Transverse colon (tissue), 4 donors: ENCODE measurements at regions of chr14 and their contacts with region 1.

Region 1: DNA sequence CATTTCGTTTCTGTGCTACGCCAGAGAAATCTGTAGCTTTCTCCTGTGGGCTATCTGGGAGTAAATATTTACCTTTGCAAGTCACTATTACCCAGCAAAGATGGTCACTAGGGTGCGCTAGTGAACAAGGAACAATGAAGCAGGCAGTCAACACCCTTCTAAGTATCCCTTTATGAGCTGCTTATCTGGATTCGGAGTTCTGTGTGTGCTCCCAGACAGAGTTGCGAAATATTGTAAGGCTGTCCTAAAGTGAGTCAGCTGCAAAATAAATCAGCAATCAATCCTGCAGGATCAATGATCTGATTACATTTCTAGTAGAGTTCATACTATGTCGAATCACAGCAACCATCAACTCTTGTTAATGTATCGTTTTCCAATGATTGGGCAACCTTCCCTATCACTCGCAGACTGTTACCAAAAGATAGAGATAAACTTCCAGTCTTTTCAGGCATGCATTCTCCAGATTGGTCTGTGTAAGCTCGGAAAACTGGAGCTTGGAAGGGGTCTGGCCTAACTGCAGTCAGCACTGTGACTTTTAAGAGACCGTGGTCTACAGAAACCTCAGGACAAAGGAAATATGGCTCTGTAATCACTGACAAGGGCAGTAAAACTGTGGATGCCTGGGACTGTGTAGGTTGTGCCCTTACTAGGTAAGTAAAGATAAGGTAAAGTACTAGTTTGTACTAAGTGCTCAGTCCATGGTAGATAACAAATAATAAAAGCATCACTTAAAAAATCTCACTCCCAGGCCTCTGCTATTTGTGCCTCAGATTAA is 133.5 kb downstream of the KCNK10 start:
- DNase-seq: peak; percentile 88
- H3K4me3 ChIP-seq: peak overlapping the region in 2 of 4 donors; percentile 9 to 22
- H3K27ac ChIP-seq: no peak overlapping the region
- H3K4me1 ChIP-seq: peaks cover 0 to 14% (median 6%) of the 10 kb centered on the region in 4 donors
- H3K27me3 ChIP-seq: peaks cover 12% of the 10 kb centered on the region
- CTCF ChIP-seq: peak; percentile 51 to 75 (median 59)
- EP300 ChIP-seq: no peak
- POLR2A ChIP-seq: no peak

Region 2: GRCh38 chr14:88385345-88386101 is 195.9 kb after region 1 on chr14 and contains the start of gene SPATA7:
- in situ Hi-C with region 1: loop called in 1 of 4 experiments (anchors 25 kb)
- intact Hi-C with region 1: no loop called
- DNase-seq: peak; percentile 95
- H3K4me3 ChIP-seq: peak within 1 kb of the TSS; percentile 62 to 95 (median 74)
- H3K27ac ChIP-seq: peak within 1 kb of the TSS; percentile 78 to 88 (median 82)
- H3K4me1 ChIP-seq: peaks cover 0 to 19% (median 7%) of the 10 kb centered on the region in 4 donors
- H3K27me3 ChIP-seq: no peaks in the 10 kb centered on the region
- CTCF ChIP-seq: no peak
- EP300 ChIP-seq: no peak
- POLR2A ChIP-seq: peak; percentile 69
- total RNA-seq, gene SPATA7: 2.8 to 15.7 (median 10.8) TPM

Region 3: DNA sequence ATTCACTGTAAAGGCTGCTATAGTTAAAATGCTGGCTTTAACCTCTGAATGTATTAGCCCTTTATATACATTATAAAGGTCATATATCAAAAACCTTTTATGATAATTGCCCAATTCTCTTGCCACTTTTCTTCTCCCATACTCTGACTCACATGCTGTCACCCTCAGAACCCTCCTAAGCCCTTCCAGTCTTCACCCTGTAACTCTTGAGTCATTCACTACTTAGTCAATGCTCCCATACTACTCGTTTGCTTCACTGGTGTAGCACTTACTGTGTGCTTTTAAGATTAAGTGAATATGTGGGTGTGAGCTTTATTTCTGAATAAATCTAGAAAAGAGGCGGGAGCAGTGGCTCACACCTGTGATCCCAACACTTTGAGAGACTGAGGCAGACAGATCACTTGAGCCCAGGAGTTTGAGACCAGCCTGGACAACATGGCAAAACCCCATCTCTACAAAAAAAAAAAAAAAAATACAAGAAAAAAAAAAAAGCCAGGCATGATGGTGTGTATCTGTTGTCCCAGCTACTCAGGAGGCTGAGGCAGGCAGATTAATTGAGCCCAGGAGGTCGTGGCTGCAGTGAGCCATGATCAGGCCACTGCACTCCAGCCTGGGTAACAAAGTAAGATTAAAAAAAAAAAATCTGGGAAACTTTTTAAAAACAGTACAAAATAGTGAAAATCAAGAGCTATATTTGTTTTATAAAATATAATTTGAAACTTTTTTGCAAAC is 233.5 kb after region 1 on chr14:
- in situ Hi-C with region 1: no loop called
- intact Hi-C with region 1: no loop called
- DNase-seq: no peak
- H3K4me3 ChIP-seq: no peak overlapping the region
- H3K27ac ChIP-seq: no peak overlapping the region
- H3K4me1 ChIP-seq: no peaks in the 10 kb centered on the region
- H3K27me3 ChIP-seq: no peaks in the 10 kb centered on the region
- CTCF ChIP-seq: no peak
- EP300 ChIP-seq: no peak
- POLR2A ChIP-seq: no peak

Region 4: DNA sequence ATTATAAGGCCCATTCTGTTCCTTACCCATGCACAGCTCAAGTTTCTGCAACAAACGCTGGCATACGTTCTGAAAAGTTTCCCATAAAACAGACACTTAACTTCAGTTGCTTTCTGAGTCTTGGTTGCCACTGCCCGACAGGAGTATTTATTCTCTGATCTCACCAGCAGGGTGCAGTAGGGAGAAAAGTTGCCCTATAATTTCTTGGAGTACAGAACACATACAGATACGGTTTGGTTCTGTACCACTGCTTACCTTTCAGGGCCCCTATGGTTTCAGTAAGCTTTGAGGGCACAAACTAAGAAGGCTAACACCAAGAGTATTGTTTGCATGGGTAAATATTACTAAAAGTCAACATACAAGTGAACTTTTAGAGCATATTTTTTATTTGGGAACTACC is 273.7 kb after region 1 on chr14:
- in situ Hi-C with region 1: loop called in 1 of 4 experiments (anchors 25 kb)
- intact Hi-C with region 1: no loop called
- DNase-seq: no peak
- H3K4me3 ChIP-seq: no peak overlapping the region
- H3K27ac ChIP-seq: no peak overlapping the region
- H3K4me1 ChIP-seq: no peaks in the 10 kb centered on the region
- H3K27me3 ChIP-seq: no peaks in the 10 kb centered on the region
- CTCF ChIP-seq: peak; percentile 29 to 35 (median 29)
- EP300 ChIP-seq: no peak
- POLR2A ChIP-seq: no peak

Region 5: GRCh38 chr14:88562831-88563686 is 373.5 kb after region 1 on chr14 and contains the start of gene ZC3H14:
- in situ Hi-C with region 1: loop called in 1 of 4 experiments (anchors 25 kb)
- intact Hi-C with region 1: no loop called
- DNase-seq: peak; percentile 89
- H3K4me3 ChIP-seq: peak within 1 kb of the TSS; percentile 59 to 94 (median 92)
- H3K27ac ChIP-seq: peak within 1 kb of the TSS; percentile 95 to 98 (median 97)
- H3K4me1 ChIP-seq: peaks cover 6 to 25% (median 14%) of the 10 kb centered on the region in 4 donors
- H3K27me3 ChIP-seq: no peaks in the 10 kb centered on the region
- CTCF ChIP-seq: no peak
- EP300 ChIP-seq: no peak
- POLR2A ChIP-seq: peak; percentile 87
- total RNA-seq, gene ZC3H14: 29.9 to 103 (median 81.0) TPM

Region 6: GRCh38 chr14:89137514-89138163 is 948.0 kb after region 1 on chr14:
- in situ Hi-C with region 1: no loop called
- intact Hi-C with region 1: no loop called
- DNase-seq: no peak
- H3K4me3 ChIP-seq: no peak overlapping the region
- H3K27ac ChIP-seq: no peak overlapping the region
- H3K4me1 ChIP-seq: no peaks in the 10 kb centered on the region
- H3K27me3 ChIP-seq: no peaks in the 10 kb centered on the region
- CTCF ChIP-seq: no peak
- EP300 ChIP-seq: no peak
- POLR2A ChIP-seq: no peak